Activated T-helper 2 cell treated with anti-CD3 and anti-CD28 coated beads, Interferon-gamma antibody, Interleukin-2, Interleukin-4, amounts not matched to agents 10 μg/mL and 5 μg/mL and 100 μg/mL, durations not matched to agents 14 hours and 24 hours and 36 hours (primary cell): ENCODE measurements at regions of chr2 and their contacts with region 1.

Region 1: GRCh38 chr2:8872821-8873432 is 35.5 kb upstream of the KIDINS220 start:
- DNase-seq: no peak
- H3K4me3 Mint-ChIP-seq: no peak overlapping the region
- H3K27ac Mint-ChIP-seq: no peak overlapping the region
- H3K4me1 Mint-ChIP-seq: no peaks in the 10 kb centered on the region
- H3K27me3 Mint-ChIP-seq: peaks cover 4% of the 10 kb centered on the region

Region 2: DNA sequence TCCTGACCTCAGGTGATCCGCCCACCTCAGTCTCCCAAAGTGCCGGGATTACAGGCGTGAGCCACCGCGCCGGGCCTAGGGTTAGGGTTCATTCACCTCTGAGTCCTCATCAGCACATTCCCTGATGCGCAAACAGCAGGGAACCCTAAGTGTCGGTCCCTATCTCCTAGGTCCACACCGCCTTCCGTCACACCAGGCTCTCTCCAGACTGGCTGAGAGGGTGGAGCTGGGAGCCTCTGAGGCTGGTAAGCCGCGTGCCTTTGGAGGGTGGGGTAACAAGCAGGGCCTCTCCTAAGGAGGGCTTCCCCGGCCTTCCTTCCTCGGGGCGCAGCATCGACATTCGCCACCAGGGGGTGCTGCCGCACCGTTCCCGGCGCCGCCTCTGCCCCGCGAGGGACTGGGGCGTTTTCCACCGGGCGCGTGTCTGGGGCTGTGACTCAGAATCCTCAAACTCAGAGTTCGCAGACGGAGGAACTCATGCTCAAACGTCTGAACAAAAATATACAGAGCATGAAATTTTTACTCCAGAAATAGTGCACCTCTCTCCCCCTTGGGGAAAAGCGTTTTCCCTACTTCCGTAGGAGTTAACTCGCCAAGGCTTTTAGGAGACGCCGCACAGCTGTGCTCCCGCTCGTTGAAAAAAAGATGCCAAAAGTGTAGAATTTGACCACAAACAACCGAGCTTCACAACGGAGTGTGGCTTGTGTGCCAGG is 269.8 kb after region 1 on chr2:
- intact Hi-C with region 1: loop called (anchors 5 kb)
- DNase-seq: peak; percentile 68
- H3K4me3 Mint-ChIP-seq: peak overlapping the region; percentile 4
- H3K27ac Mint-ChIP-seq: no peak overlapping the region
- H3K4me1 Mint-ChIP-seq: peaks cover 1% of the 10 kb centered on the region
- H3K27me3 Mint-ChIP-seq: peaks cover 19% of the 10 kb centered on the region